CD8-positive, alpha-beta T cell (primary cell): ENCODE measurements at regions of chr16 and their contacts with region 1.

Region 1: GRCh38 chr16:720990-721764 is at the start of gene ANTKMT:
- DNase-seq: peak; percentile 51 to 91 (median 77)
- ATAC-seq: peak; percentile 64
- H3K4me3 ChIP-seq: peak within 1 kb of the TSS; percentile 79 to 86
- H3K4me3 Mint-ChIP-seq: peak within 1 kb of the TSS; percentile 86
- H3K27ac ChIP-seq: peak within 1 kb of the TSS; percentile 72 to 80
- H3K27ac Mint-ChIP-seq: peak within 1 kb of the TSS; percentile 86
- H3K4me1 ChIP-seq: peaks cover 45% of the 10 kb centered on the region
- H3K4me1 Mint-ChIP-seq: peaks cover 44% of the 10 kb centered on the region
- H3K27me3 ChIP-seq: peaks cover 0 to under 1% of the 10 kb centered on the region in 2 experiments
- H3K27me3 Mint-ChIP-seq: no peaks in the 10 kb centered on the region
- CTCF ChIP-seq: no peak
- total RNA-seq, gene ANTKMT: 24.7 to 29.6 TPM

Region 2: GRCh38 chr16:689175-689901 is 31.8 kb before region 1 on chr16:
- CTCF ChIA-PET with region 1: no interaction called
- POLR2A ChIA-PET with region 1: interaction called, 31 read pairs
- intact Hi-C with region 1: no loop called
- DNase-seq: no peak
- ATAC-seq: no peak
- H3K4me3 ChIP-seq: peak overlapping the region; percentile 86 to 87
- H3K4me3 Mint-ChIP-seq: peak overlapping the region; percentile 90
- H3K27ac ChIP-seq: peak overlapping the region; percentile 58 to 83
- H3K27ac Mint-ChIP-seq: peak overlapping the region; percentile 91
- H3K4me1 ChIP-seq: peaks cover 26% of the 10 kb centered on the region
- H3K4me1 Mint-ChIP-seq: peaks cover 26% of the 10 kb centered on the region
- H3K27me3 ChIP-seq: peaks cover 0 to 3% of the 10 kb centered on the region in 2 experiments
- H3K27me3 Mint-ChIP-seq: no peaks in the 10 kb centered on the region
- CTCF ChIP-seq: no peak

Region 3: GRCh38 chr16:695355-696089 is 25.7 kb before region 1 on chr16:
- CTCF ChIA-PET with region 1: interaction called, 5 read pairs
- POLR2A ChIA-PET with region 1: interaction called, 31 read pairs
- intact Hi-C with region 1: no loop called
- DNase-seq: peak; percentile 41 to 85 (median 62)
- ATAC-seq: peak; percentile 76
- H3K4me3 ChIP-seq: peak overlapping the region; percentile 58 to 59
- H3K4me3 Mint-ChIP-seq: peak overlapping the region; percentile 77
- H3K27ac ChIP-seq: peak overlapping the region in 1 of 2 experiments; percentile 45
- H3K27ac Mint-ChIP-seq: peak overlapping the region; percentile 66
- H3K4me1 ChIP-seq: peaks cover 42% of the 10 kb centered on the region
- H3K4me1 Mint-ChIP-seq: peaks cover 28% of the 10 kb centered on the region
- H3K27me3 ChIP-seq: peaks cover 0 to 17% of the 10 kb centered on the region in 2 experiments
- H3K27me3 Mint-ChIP-seq: no peaks in the 10 kb centered on the region
- CTCF ChIP-seq: no peak

Region 4: GRCh38 chr16:788394-789126 is 67.4 kb after region 1 on chr16 and contains the start of gene CHTF18:
- CTCF ChIA-PET with region 1: interaction called, 143 read pairs
- POLR2A ChIA-PET with region 1: interaction called, 14 read pairs
- intact Hi-C with region 1: no loop called
- DNase-seq: peak; percentile 88 to 96 (median 92)
- ATAC-seq: peak; percentile 98
- H3K4me3 ChIP-seq: peak within 1 kb of the TSS; percentile 81 to 97
- H3K4me3 Mint-ChIP-seq: peak within 1 kb of the TSS; percentile 84
- H3K27ac ChIP-seq: peak within 1 kb of the TSS; percentile 10 to 53
- H3K27ac Mint-ChIP-seq: peak within 1 kb of the TSS; percentile 49
- H3K4me1 ChIP-seq: peaks cover 19% of the 10 kb centered on the region
- H3K4me1 Mint-ChIP-seq: peaks cover 7% of the 10 kb centered on the region
- H3K27me3 ChIP-seq: no peaks in the 10 kb centered on the region
- H3K27me3 Mint-ChIP-seq: no peaks in the 10 kb centered on the region
- CTCF ChIP-seq: no peak
- total RNA-seq, gene CHTF18: 34.4 to 38.4 TPM